AG04450 (cell line): ENCODE measurements at regions of chr2 and their contacts with region 1.

Region 1: DNA sequence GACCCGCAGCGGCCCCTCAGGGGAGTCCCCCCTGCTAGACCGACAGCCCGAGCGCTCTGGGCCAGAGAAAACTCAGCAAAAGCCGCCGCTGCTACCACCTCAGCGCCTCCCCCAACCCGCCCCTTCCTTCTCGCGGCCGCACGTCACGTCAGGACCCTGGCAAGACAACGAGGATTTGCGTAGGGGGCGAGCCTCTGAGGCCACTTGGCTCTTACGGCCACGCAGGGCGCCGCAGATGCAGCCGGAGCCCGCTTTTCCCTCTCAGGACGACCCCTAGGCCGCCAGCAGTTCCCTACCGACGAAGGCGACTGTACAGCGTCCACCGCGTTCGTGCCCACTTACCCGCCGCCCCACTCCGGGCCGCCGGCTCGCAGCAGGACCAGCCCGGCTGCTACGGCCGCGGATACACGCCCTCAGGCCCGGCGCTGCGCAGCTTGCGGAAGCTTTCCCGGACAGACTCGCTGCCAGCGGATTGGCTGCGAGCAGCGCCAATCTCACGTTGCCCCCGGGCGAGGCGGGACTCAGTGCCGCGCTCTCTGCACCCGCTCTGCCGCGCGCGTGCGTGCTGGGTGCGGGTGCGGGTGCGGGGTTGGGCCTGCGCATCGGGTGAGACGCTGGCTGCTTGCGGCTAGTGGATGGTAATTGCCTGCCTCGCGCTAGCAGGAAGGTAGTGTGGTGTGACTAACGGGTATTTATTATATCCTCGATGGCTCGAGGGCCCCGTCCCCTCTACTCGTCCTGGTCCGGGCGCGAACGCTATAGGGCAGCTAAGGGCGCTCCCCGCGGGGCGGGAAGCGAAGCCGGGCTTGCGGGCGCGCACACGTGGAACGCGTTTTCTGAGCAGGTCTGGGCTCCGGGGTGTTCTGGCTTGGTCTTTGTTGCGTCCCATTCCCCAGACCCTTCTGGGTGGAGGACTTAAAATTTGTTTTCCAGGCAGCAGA is at the starts of genes ORMDL1 and PMS1:
- DNase-seq: peak; percentile 89
- H3K4me3 ChIP-seq: peak within 1 kb of the TSS; percentile 65
- H3K27ac ChIP-seq: peak within 1 kb of the TSS; percentile 95
- H3K27me3 ChIP-seq: no peaks in the 10 kb centered on the region
- CTCF ChIP-seq: no peak
- polyA plus RNA-seq, gene ORMDL1: 73.0 and 92.8 TPM in 2 replicates
- polyA plus RNA-seq, gene PMS1: 11.0 and 16.3 TPM in 2 replicates

Region 2: GRCh38 chr2:189309331-189309730 is 474.9 kb before region 1 on chr2:
- CTCF ChIA-PET with region 1: no interaction called
- POLR2A ChIA-PET with region 1: no interaction called
- DNase-seq: no peak
- H3K4me3 ChIP-seq: no peak overlapping the region
- H3K27ac ChIP-seq: no peak overlapping the region
- H3K27me3 ChIP-seq: no peaks in the 10 kb centered on the region
- CTCF ChIP-seq: no peak

Region 3: GRCh38 chr2:189362283-189362682 is 421.9 kb before region 1 on chr2:
- CTCF ChIA-PET with region 1: no interaction called
- POLR2A ChIA-PET with region 1: no interaction called
- DNase-seq: no peak
- H3K4me3 ChIP-seq: no peak overlapping the region
- H3K27ac ChIP-seq: no peak overlapping the region
- H3K27me3 ChIP-seq: no peaks in the 10 kb centered on the region
- CTCF ChIP-seq: no peak

Region 4: GRCh38 chr2:189762551-189763298 is 21.5 kb before region 1 on chr2 and contains the start of gene OSGEPL1:
- CTCF ChIA-PET with region 1: interaction called, 12 read pairs
- POLR2A ChIA-PET with region 1: interaction called, 7 read pairs
- DNase-seq: peak; percentile 71
- H3K4me3 ChIP-seq: peak within 1 kb of the TSS; percentile 75
- H3K27ac ChIP-seq: peak within 1 kb of the TSS; percentile 78
- H3K27me3 ChIP-seq: no peaks in the 10 kb centered on the region
- CTCF ChIP-seq: peak; percentile 72
- polyA plus RNA-seq, gene OSGEPL1: 3.9 and 6.0 TPM in 2 replicates

Region 5: DNA sequence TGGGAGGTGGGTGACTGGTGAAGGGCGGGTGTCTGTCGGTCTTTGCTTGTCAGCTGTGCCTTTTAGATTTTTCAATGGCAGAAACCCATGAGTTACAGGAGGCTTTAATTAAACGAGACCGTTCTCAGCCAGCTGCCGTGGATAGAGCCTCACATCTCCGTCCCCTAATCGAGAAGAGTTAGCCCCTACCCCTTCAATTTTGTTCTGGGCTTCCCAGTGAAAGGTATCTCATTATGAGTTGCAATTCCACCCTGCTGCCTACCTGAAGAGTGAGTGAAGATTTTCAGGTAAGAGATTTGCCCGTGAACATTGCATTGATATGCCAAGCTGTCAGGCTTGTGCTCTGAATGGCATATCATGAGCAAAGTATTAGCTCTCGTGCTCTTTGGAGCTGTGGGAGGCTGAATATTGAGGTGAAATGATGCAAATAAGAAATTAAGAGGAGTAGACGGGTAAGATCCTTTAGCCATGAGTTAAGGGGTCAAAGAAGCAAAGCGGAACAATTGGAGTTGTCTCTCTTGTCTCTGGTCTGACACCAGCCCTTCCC is 397.0 kb after region 1 on chr2:
- CTCF ChIA-PET with region 1: no interaction called
- POLR2A ChIA-PET with region 1: no interaction called
- DNase-seq: no peak
- H3K4me3 ChIP-seq: peak overlapping the region; percentile 64
- H3K27ac ChIP-seq: no peak overlapping the region
- H3K27me3 ChIP-seq: no peaks in the 10 kb centered on the region
- CTCF ChIP-seq: no peak